Posterior vena cava (tissue), 2 donors: ENCODE measurements at regions of chr19 and their contacts with region 1.

Region 1: GRCh38 chr19:3125900-3126524 is 9.8 kb upstream of the GNA15 start:
- DNase-seq: no peak

Region 2: DNA sequence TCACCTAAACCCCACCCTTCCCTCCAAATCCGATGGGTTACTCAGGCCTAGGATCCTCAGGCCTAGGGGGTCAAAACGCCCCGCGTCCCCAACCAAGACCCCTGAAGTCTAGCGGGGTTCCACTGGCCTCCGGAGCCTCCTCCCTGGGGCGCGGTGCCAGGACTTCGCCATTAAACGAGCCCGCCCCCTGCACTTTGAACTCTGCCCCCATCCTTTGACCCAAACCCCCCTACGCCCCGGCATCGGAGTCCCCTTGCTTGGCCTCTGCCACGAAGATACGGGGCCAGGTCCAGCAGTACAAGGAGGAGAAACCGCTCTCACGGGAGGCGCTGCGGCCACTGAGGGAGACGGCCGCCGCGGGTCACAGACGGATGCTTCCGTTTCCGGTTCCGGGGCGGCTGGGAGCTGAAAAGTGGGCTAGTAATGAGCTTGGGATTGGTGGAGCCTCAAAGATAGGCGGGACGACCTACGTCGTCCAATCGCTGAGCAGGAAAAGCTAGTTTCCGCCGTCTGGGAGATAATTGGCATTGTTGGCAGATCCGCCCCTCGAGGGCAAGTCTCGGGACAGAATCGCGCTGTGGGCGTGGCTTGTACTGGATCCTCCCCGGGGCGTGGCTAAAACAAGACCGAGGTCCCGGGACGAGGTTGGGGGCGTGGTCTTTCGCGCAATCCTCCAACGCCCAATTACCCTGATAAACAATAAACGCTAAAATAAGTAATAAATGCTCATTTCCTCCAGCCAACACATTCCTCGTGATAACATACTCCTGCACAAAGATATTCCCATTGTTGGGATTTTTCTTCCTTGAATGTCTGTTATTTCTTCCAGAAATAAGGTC is 175.5 kb before region 1 on chr19:
- intact Hi-C with region 1: loop called in 1 of 2 experiments (anchors 5 kb)
- DNase-seq: peak; percentile 100

Region 3: DNA sequence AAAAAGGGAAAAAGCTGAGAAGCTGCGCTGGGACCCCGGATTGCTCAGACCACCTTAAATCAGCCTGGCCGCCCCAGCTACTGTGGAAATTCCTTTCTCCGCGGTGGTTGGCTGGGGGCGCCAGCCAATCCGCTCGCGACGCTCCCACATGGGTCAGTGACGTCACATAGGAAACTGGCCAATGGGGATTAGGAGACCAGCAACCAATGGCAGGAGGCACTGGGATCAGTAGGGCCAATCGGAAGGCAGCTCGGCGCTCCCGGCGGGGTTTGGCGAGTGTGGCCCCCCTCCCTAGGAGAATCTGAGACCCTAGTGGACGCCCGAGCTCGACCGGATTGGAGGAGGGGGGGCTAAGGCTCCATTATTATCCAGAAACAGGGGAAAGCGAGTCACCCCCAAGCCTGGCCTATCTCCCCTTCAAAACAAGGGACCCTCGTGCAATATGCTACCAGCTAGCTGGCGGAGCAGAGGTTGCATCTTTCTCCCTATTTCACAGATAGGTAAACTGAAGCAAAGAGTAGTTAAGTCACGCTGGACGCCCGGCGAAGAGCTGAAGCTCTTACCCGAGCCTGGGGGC is 90.4 kb before region 1 on chr19:
- intact Hi-C with region 1: no loop called
- DNase-seq: peak; percentile 98

Region 4: DNA sequence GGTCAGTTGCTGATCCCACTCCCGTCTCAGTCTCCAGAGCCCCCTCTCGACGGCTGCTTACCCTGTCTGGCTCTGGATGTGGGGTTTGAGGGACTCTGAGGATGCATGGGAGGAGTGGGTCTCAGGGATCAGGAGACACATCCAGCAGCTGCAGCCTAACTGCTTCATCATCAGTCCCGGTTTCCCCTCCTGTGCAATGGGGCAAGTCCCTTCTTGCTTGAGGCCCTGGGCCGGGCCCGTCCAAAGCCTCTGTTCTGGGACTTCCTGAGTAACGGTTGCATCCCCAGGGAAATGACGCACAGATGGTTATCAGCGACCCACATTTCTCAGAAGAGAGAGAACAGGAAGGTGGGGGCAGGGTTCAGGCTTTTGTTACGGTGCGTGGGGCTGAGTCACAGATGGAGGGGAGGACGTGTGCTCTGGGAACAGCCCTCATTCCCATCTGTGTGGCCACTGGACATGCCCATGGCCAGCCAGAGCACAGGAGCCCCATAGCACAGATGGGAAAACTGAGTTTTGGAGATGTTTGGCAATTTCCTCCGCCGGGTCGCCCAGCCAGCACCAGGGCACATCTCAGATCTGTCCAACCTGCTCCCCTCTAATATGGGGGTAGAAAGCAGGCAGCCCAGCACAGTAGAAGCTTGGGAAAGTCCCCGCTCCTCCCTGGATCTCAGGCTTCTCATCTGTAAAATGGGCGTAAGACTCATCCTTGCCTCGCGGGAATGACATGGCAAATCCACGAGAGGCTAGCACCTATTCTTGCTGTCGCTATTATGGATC is 29.1 kb after region 1 on chr19:
- intact Hi-C with region 1: loop called in 1 of 2 experiments (anchors 2 kb)
- DNase-seq: peak; percentile 95

Region 5: DNA sequence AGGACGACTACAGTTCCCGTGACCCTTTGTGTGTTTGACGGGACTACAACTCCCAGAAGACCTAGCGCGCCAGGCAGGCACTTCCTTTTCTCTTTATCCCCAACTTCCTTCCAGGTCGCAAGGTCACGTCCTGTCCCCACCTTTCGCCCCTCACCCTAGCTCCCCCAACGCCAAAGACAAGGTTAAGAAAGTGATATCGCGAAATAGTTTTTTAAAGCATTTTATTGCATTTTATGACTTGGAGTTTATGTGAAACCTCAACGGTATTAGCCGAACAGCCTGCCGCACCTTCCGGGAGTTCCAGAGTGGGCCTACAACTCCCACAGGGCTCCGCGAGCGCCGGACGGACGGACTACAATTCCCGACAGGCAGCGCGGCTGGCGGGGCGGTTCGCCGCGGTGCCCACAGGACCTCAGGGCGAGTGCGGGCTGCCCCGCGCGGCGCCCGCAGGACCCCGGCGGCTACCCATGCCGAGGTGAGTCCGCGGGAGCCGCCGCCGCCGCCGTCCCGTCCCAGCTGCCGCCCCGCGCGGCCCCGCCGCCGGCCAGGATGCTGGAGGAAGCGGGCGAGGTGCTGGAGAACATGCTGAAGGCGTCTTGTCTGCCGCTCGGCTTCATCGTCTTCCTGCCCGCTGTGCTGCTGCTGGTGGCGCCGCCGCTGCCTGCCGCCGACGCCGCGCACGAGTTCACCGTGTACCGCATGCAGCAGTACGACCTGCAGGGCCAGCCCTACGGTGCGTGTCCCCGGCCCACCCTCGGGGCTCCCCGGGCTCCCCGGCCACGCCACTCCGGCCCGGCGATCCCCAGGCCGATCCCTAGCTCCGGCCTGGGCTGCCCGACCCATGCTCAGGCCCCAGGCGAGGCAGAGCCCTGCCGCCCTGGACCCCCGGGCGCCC is 59.7 kb after region 1 on chr19 and contains the start of gene NCLN:
- intact Hi-C with region 1: no loop called
- DNase-seq: peak; percentile 99
- total RNA-seq, gene NCLN: 37.7 to 40.4 TPM

Region 6: GRCh38 chr19:3224346-3225168 is 98.5 kb after region 1 on chr19 and contains the start of gene CELF5:
- intact Hi-C with region 1: no loop called
- DNase-seq: no peak
- total RNA-seq, gene CELF5: not detected